Activated CD4-positive, alpha-beta memory T cell treated with anti-CD3 and anti-CD28 coated beads, Interleukin-2, amount 10 ng/mL, durations not matched to agents 7 days and 5 days (primary cell): ENCODE measurements at regions of chr7 and their contacts with region 1.

Region 1: DNA sequence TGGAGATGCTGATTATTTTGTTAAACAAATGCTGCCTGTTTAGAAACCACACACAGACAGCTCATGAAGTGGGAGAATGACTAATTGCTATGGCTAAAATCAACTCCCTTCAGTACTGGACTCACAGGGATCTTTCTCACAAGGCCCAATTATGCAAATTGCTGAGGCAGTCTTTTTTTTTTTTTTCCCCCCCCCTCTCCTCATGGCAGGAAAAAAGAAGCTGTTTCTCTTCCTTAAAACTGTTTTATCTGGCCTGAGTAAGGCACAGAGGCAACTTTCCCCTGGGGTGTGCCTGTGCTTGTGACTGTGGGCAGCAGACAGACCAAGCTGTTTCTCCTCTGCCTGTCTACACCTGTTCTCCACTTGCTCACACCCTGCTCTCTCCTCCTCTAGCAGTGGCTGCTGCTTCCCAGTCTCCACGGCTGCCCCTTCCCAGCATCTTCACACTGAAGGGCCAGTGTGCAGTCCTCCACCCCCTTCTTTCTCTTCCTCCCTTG is 65.4 kb upstream of the STEAP1B start:
- DNase-seq: no peak
- H3K4me3 Mint-ChIP-seq: peak overlapping the region; percentile 37
- H3K27ac Mint-ChIP-seq: peak overlapping the region; percentile 64
- H3K4me1 Mint-ChIP-seq: peaks cover 54% of the 10 kb centered on the region
- H3K27me3 Mint-ChIP-seq: peaks cover 41% of the 10 kb centered on the region

Region 2: GRCh38 chr7:22672846-22673652 is 107.7 kb after region 1 on chr7:
- CTCF ChIA-PET with region 1: interaction called, 5 read pairs
- POLR2A ChIA-PET with region 1: interaction called, 16 read pairs
- DNase-seq: no peak
- H3K4me3 Mint-ChIP-seq: no peak overlapping the region
- H3K27ac Mint-ChIP-seq: peak overlapping the region; percentile 42
- H3K4me1 Mint-ChIP-seq: peaks cover 71% of the 10 kb centered on the region
- H3K27me3 Mint-ChIP-seq: peaks cover 3% of the 10 kb centered on the region

Region 3: GRCh38 chr7:22697876-22698606 is 132.7 kb after region 1 on chr7:
- CTCF ChIA-PET with region 1: interaction called, 6 read pairs
- POLR2A ChIA-PET with region 1: interaction called, 15 read pairs
- DNase-seq: peak; percentile 26
- H3K4me3 Mint-ChIP-seq: peak overlapping the region; percentile 1
- H3K27ac Mint-ChIP-seq: peak overlapping the region; percentile 67
- H3K4me1 Mint-ChIP-seq: peaks cover 63% of the 10 kb centered on the region
- H3K27me3 Mint-ChIP-seq: peaks cover 2% of the 10 kb centered on the region